Mammary epithelial cell (primary cell): ENCODE measurements at regions of chr2 and their contacts with region 1.

Region 1: DNA sequence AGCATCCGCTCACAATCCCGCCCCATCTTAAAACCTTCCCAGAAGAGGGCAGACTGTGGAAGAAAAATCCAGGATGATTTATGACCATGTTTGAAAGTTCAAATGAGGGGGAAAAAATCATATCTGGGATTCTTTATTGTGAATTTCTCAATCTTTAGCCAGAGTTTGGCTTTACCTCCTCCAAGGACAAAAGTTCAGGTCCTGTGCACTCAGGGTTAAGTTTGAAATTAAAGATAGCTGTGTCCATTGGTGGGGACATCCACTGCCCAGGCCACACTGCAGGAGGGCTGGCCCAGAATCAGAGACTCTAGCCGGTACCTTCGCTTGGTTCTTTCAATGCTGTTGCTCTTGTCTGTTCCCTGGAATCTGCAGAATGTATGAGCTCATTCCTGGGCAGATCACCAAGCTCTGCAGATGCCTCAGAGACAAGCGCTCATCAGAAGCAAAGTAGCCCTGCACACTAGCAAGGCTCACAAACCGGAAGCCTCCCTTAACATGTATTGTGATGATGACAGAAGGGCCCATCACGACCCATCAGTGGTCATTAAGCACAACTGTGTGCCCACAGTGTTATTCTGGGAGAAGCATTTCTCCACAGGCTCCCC is 375.3 kb upstream of the KLHL29 start:
- DNase-seq: no peak
- H3K4me3 ChIP-seq: no peak overlapping the region
- H3K27ac ChIP-seq: no peak overlapping the region
- H3K4me1 ChIP-seq: no peaks in the 10 kb centered on the region
- H3K27me3 ChIP-seq: no peaks in the 10 kb centered on the region
- CTCF ChIP-seq: no peak

Region 2: DNA sequence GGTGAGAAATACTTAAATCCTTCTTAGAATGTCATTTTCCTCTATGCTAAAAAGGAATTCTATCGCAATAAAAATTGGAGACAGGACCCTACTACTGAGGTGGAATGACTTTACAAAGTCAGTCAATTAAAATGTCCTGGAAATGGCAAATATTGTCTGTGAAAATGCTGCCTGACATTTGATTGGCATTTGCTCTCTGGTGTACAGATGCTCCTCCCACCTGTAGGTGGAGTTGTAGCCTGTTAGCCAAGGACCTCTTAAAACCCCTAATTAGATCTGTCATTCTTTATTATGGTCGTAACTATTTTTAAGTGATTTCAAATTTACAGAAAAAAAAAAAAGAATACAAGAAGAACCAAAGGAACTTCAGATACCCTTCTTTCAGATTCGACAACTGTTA is 17.8 kb before region 1 on chr2:
- CTCF ChIA-PET with region 1: no interaction called
- dilution Hi-C with region 1: no loop called
- in situ Hi-C with region 1: no loop called
- intact Hi-C with region 1: no loop called
- DNase-seq: no peak
- H3K4me3 ChIP-seq: no peak overlapping the region
- H3K27ac ChIP-seq: no peak overlapping the region
- H3K4me1 ChIP-seq: no peaks in the 10 kb centered on the region
- H3K27me3 ChIP-seq: no peaks in the 10 kb centered on the region
- CTCF ChIP-seq: no peak

Region 3: DNA sequence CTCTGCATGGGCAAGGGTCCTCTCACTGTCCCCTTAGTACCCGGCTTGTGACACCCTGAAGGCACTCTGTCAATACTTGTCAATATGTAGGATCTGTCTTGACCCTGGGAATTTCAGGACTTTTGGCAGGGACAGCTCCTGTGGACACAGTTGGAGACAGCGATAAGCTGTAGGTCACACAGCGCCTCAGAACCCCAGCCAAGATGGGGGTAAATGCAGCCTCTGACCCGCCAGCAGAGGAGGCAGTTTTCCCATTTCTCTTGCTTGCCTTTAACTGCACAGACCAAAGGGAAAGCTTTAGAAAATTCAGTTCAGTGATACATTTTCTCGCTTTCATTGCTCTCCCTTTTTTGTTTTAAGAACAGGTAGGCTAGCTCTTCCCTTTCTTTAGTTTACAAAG is 320.6 kb after region 1 on chr2:
- CTCF ChIA-PET with region 1: no interaction called
- dilution Hi-C with region 1: loop called (anchors 25 kb)
- in situ Hi-C with region 1: no loop called
- intact Hi-C with region 1: no loop called
- DNase-seq: no peak
- H3K4me3 ChIP-seq: no peak overlapping the region
- H3K27ac ChIP-seq: no peak overlapping the region
- H3K4me1 ChIP-seq: no peaks in the 10 kb centered on the region
- H3K27me3 ChIP-seq: no peaks in the 10 kb centered on the region
- CTCF ChIP-seq: peak in 1 of 2 donors; percentile 9